GM12878 (cell line): ENCODE measurements at regions of chr22 and their contacts with region 1.

Region 1: GRCh38 chr22:39520054-39520891 is at the start of gene ATF4:
- DNase-seq: peak; percentile 93
- ATAC-seq: peak; percentile 91
- H3K4me3 ChIP-seq: peak within 1 kb of the TSS; percentile 97
- H3K27ac ChIP-seq: peak within 1 kb of the TSS; percentile 96
- H3K4me1 ChIP-seq: peaks cover 23% of the 10 kb centered on the region
- H3K27me3 ChIP-seq: no peaks in the 10 kb centered on the region
- CTCF ChIP-seq: no peak
- EP300 ChIP-seq: no peak
- POLR2A ChIP-seq: peak; percentile 93
- RAD21 ChIP-seq: no peak
- polyA plus RNA-seq, gene ATF4: 88.3 to 187 TPM

Region 2: DNA sequence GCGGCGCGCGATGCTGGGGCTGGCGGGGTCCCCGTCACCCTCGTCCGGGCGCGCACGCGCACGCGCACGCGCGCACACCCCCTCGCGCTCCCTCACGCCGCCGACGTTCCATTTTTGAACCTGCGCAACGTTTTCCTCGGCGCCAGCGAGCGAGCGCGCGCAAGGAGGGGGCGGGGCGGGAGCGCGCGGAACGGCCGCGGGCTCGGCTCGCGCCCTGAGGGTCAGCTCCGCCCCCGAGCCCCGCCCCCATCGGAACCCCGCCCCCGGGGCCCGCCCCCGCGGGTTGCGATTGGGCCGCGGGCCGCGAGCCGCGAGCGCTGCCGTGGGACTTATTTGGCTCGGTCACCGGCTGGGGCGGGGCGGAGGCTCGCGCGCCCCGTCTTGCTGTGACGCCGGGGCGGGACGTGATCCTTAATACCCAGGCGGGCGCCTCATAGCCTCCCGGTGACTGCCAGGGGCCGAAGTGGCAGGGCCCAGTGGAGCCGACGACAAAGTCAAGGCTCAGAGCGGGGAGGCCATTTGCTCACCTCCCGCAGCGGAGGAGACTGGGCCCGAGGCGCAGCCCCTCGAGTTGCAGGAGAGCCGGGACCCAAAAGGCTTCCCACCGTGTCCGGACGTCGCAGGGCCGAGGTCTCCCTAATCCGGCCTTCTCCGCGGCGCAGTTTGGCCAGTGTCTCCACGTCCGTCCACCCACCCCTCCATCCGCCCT is 367.6 kb before region 1 on chr22 and contains the start of gene CBX7:
- CTCF ChIA-PET with region 1: interaction called, 4 read pairs
- POLR2A ChIA-PET with region 1: interaction called, 3 read pairs
- RAD21 ChIA-PET with region 1: interaction called, 6 read pairs
- SMC1A ChIA-PET with region 1: interaction called, 3 read pairs
- in situ Hi-C with region 1: loop called (anchors 25 kb)
- intact Hi-C with region 1: no loop called
- DNase-seq: peak; percentile 46
- ATAC-seq: peak; percentile 79
- H3K4me3 ChIP-seq: peak within 1 kb of the TSS; percentile 80
- H3K27ac ChIP-seq: peak within 1 kb of the TSS; percentile 73
- H3K4me1 ChIP-seq: peaks cover 41% of the 10 kb centered on the region
- H3K27me3 ChIP-seq: peaks cover 3 to 12% of the 10 kb centered on the region in 2 experiments
- CTCF ChIP-seq: no peak
- EP300 ChIP-seq: no peak
- POLR2A ChIP-seq: peak; percentile 73
- RAD21 ChIP-seq: no peak
- polyA plus RNA-seq, gene CBX7: 0.18 to 0.64 TPM

Region 3: GRCh38 chr22:39446295-39446721 is 74.0 kb before region 1 on chr22:
- CTCF ChIA-PET with region 1: interaction called, 5 read pairs
- POLR2A ChIA-PET with region 1: interaction called, 5 read pairs
- RAD21 ChIA-PET with region 1: interaction called, 9 read pairs
- SMC1A ChIA-PET with region 1: interaction called, 3 read pairs
- in situ Hi-C with region 1: no loop called
- intact Hi-C with region 1: loop called (anchors 5 kb)
- DNase-seq: peak; percentile 59
- ATAC-seq: peak; percentile 67
- H3K4me3 ChIP-seq: 0 out of 2 replicates have a peak overlapping the region, but pooled peaks have one; percentile 94
- H3K27ac ChIP-seq: peak overlapping the region; percentile 92
- H3K4me1 ChIP-seq: peaks cover 84% of the 10 kb centered on the region
- H3K27me3 ChIP-seq: no peaks in the 10 kb centered on the region
- CTCF ChIP-seq: peak in 2 of 3 experiments; percentile 13 to 43; a peak in 2 of 6 replicates
- EP300 ChIP-seq: no peak
- POLR2A ChIP-seq: no peak
- RAD21 ChIP-seq: no peak

Region 4: GRCh38 chr22:39496131-39496838 is 24.0 kb before region 1 on chr22:
- CTCF ChIA-PET with region 1: interaction called, 372 read pairs
- POLR2A ChIA-PET with region 1: interaction called, 6 read pairs
- RAD21 ChIA-PET with region 1: interaction called, 7 read pairs
- SMC1A ChIA-PET with region 1: interaction called, 7 read pairs
- in situ Hi-C with region 1: no loop called
- intact Hi-C with region 1: no loop called
- DNase-seq: no peak
- ATAC-seq: peak; percentile 93
- H3K4me3 ChIP-seq: no peak overlapping the region
- H3K27ac ChIP-seq: no peak overlapping the region
- H3K4me1 ChIP-seq: no peaks in the 10 kb centered on the region
- H3K27me3 ChIP-seq: no peaks in the 10 kb centered on the region
- CTCF ChIP-seq: peak; percentile 68 to 86 (median 82)
- EP300 ChIP-seq: no peak
- POLR2A ChIP-seq: no peak
- RAD21 ChIP-seq: peak; percentile 42

Region 5: GRCh38 chr22:39502109-39502788 is 18.0 kb before region 1 on chr22 and contains the start of gene MIEF1:
- CTCF ChIA-PET with region 1: interaction called, 372 read pairs
- POLR2A ChIA-PET with region 1: interaction called, 9 read pairs
- RAD21 ChIA-PET with region 1: interaction called, 9 read pairs
- SMC1A ChIA-PET with region 1: interaction called, 6 read pairs
- in situ Hi-C with region 1: no loop called
- intact Hi-C with region 1: loop called (anchors 2 kb)
- DNase-seq: peak; percentile 87
- ATAC-seq: peak; percentile 99
- H3K4me3 ChIP-seq: peak within 1 kb of the TSS; percentile 95
- H3K27ac ChIP-seq: peak within 1 kb of the TSS; percentile 73
- H3K4me1 ChIP-seq: 0 out of 2 replicates have a peak, but pooled peaks cover 5% of the 10 kb centered on the region
- H3K27me3 ChIP-seq: no peaks in the 10 kb centered on the region
- CTCF ChIP-seq: no peak
- EP300 ChIP-seq: no peak
- POLR2A ChIP-seq: peak; percentile 94
- RAD21 ChIP-seq: no peak
- polyA plus RNA-seq, gene MIEF1: 12.4 to 13.8 TPM